ENCODE measurements at regions of chr14 and their contacts with region 1.

Region 1: GRCh38 chr14:101235335-101236103 is 325.8 kb upstream of the DIO3 start:
- DNase-seq: peak in 1 of 2 experiments; percentile 89
- H3K4me3 ChIP-seq: no peak overlapping the region
- H3K27ac ChIP-seq: no peak overlapping the region
- H3K4me1 ChIP-seq: peaks cover 0 to 6% (median 0%) of the 10 kb centered on the region in 4 experiments; a peak in 3 of 7 replicates
- H3K27me3 ChIP-seq: no peaks in the 10 kb centered on the region; a peak in 1 of 7 replicates
- CTCF ChIP-seq: peak in 2 of 3 experiments; percentile 81 to 92; a peak in 3 of 4 replicates
- EP300 ChIP-seq: no peak
- POLR2A ChIP-seq: no peak
- RAD21 ChIP-seq: peak; percentile 92 to 96

Region 2: GRCh38 chr14:101183376-101184103 is 52.0 kb before region 1 on chr14:
- CTCF ChIA-PET with region 1: interaction called, 18 read pairs
- POLR2A ChIA-PET with region 1: no interaction called
- DNase-seq: peak; percentile 15 to 90
- H3K4me3 ChIP-seq: no peak overlapping the region
- H3K27ac ChIP-seq: no peak overlapping the region
- H3K4me1 ChIP-seq: peaks cover 0 to 5% (median 4%) of the 10 kb centered on the region in 4 experiments; a peak in 4 of 7 replicates
- H3K27me3 ChIP-seq: no peaks in the 10 kb centered on the region; a peak in 1 of 7 replicates
- CTCF ChIP-seq: peak; percentile 79 to 90 (median 86)
- EP300 ChIP-seq: no peak
- POLR2A ChIP-seq: no peak
- RAD21 ChIP-seq: peak; percentile 86 to 87

Region 3: DNA sequence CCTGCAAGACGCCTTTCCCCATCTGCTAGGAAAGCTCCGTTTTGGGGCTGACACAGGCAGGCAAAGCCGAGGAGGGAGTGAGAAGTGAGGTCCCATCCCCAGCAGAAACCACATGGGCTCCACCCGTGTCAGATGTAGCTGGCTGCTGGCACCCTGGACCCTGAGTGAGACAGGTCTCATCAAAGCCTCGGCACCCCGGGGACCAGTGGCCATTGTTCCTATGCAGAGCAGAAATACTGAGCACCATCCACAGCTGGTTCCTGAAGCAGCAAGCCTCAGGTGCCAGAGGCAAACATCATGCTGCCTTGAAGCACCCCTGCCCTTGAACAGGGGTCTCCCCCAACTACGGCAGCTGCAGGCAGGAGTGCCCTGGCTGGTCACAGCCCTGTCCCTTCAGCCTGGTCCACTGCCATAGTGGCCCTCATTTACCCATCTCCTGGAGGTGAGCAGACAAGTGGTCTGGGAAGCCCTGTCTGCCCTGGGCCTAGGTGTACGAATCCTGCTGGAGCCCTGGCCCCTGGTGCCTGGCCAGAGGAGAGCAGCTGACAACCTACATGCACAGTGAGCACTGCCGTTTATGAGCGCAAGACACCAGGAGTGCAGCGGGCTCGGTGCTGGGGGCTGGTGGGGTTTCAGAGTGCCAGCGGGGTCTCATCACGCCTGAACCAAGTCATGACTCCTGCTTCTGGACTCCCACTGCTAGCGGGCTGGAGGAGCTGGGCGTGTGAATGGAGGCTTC is 42.2 kb before region 1 on chr14:
- CTCF ChIA-PET with region 1: interaction called, 16 read pairs
- POLR2A ChIA-PET with region 1: no interaction called
- DNase-seq: peak in 1 of 2 experiments; percentile 44
- H3K4me3 ChIP-seq: no peak overlapping the region
- H3K27ac ChIP-seq: no peak overlapping the region
- H3K4me1 ChIP-seq: peaks cover 0 to 24% (median 11%) of the 10 kb centered on the region in 4 experiments; a peak in 6 of 7 replicates
- H3K27me3 ChIP-seq: peaks cover 0 to 7% (median 1%) of the 10 kb centered on the region in 4 experiments; a peak in 2 of 7 replicates
- CTCF ChIP-seq: no peak
- EP300 ChIP-seq: no peak
- POLR2A ChIP-seq: no peak
- RAD21 ChIP-seq: no peak

Region 4: GRCh38 chr14:101254805-101255764 is 19.6 kb after region 1 on chr14:
- CTCF ChIA-PET with region 1: interaction called, 12 read pairs
- POLR2A ChIA-PET with region 1: no interaction called
- DNase-seq: no peak
- H3K4me3 ChIP-seq: no peak overlapping the region
- H3K27ac ChIP-seq: no peak overlapping the region
- H3K4me1 ChIP-seq: no peaks in the 10 kb centered on the region
- H3K27me3 ChIP-seq: no peaks in the 10 kb centered on the region
- CTCF ChIP-seq: no peak
- EP300 ChIP-seq: no peak
- POLR2A ChIP-seq: no peak
- RAD21 ChIP-seq: no peak

Region 5: GRCh38 chr14:101628471-101628966 is 393.0 kb after region 1 on chr14:
- CTCF ChIA-PET with region 1: interaction called, 13 read pairs
- POLR2A ChIA-PET with region 1: no interaction called
- DNase-seq: peak; percentile 54 to 94
- H3K4me3 ChIP-seq: peak overlapping the region in 1 of 4 experiments; percentile 29; a peak in 2 of 8 replicates
- H3K27ac ChIP-seq: no peak overlapping the region
- H3K4me1 ChIP-seq: peaks cover 0 to 12% (median 6%) of the 10 kb centered on the region in 4 experiments; a peak in 5 of 7 replicates
- H3K27me3 ChIP-seq: peaks cover 0 to 12% (median 9%) of the 10 kb centered on the region in 4 experiments; a peak in 6 of 7 replicates
- CTCF ChIP-seq: peak; percentile 86 to 90 (median 89)
- EP300 ChIP-seq: no peak
- POLR2A ChIP-seq: no peak
- RAD21 ChIP-seq: peak; percentile 96 to 97